K562 (cell line): ENCODE measurements at regions of chr10 and their contacts with region 1.

Region 1: DNA sequence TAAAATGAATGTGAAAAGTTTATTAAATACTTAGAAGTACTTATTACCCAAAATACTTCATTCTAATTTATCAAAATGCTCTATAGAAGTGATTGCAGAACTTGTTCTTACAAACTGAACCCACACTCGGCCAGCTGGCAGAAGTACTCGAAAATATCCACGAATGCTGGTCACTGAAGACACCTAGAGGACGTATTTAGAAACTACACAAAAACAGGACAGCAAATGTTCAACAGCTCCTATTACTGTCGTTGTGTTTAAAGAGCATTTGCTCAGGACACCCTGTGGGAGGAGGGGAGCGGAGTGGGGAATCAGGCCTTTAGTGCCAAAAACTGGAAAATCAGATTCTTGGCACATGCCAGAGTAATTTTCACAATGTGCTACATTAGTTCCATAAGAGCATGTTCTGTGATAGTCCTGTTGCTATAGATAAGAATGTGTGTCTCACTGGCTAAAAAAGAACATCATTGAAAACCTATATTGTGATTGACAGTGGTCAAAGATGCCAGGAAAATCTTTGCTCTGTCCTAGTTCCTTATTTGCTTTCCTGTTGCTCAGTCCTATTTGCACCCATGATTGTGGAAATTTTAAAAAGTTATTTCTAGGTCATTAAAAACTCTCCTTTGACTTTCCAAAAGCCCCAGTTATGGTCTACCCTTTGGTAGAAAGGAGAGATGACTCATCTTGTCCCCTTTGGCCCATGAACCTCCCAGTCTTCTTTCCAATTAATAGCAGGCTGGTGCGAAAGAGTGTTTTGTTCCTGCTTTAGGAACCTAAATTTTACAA is 49.0 kb upstream of the NRBF2 start:
- DNase-seq: peak; percentile 40 to 73 (median 42)
- ATAC-seq: peak; percentile 96
- H3K4me3 ChIP-seq: no peak overlapping the region
- H3K27ac ChIP-seq: no peak overlapping the region
- H3K4me1 ChIP-seq: no peaks in the 10 kb centered on the region
- H3K27me3 ChIP-seq: 0 out of 5 replicates have a peak, but pooled peaks cover 0 to 5% of the 10 kb centered on the region in 2 experiments
- CTCF ChIP-seq: peak; percentile 68 to 91 (median 76)
- EP300 ChIP-seq: no peak
- POLR2A ChIP-seq: no peak
- RAD21 ChIP-seq: peak; percentile 90

Region 2: GRCh38 chr10:62610649-62611229 is 473.4 kb before region 1 on chr10:
- CTCF ChIA-PET with region 1: no interaction called
- POLR2A ChIA-PET with region 1: no interaction called
- in situ Hi-C with region 1: no loop called
- intact Hi-C with region 1: loop called (anchors 5 kb)
- DNase-seq: peak; percentile 56 to 67 (median 59)
- ATAC-seq: peak; percentile 93
- H3K4me3 ChIP-seq: no peak overlapping the region
- H3K27ac ChIP-seq: no peak overlapping the region
- H3K4me1 ChIP-seq: no peaks in the 10 kb centered on the region
- H3K27me3 ChIP-seq: no peaks in the 10 kb centered on the region
- CTCF ChIP-seq: peak; percentile 71 to 82 (median 80)
- EP300 ChIP-seq: no peak
- POLR2A ChIP-seq: no peak
- RAD21 ChIP-seq: peak; percentile 65 to 75

Region 3: GRCh38 chr10:63003816-63004453 is 80.2 kb before region 1 on chr10:
- CTCF ChIA-PET with region 1: interaction called, 6 read pairs
- POLR2A ChIA-PET with region 1: no interaction called
- in situ Hi-C with region 1: no loop called
- intact Hi-C with region 1: loop called (anchors 5 kb)
- DNase-seq: peak in 2 of 4 experiments; percentile 22
- ATAC-seq: no peak; the same call in 2 of the 3 replicates
- H3K4me3 ChIP-seq: no peak overlapping the region
- H3K27ac ChIP-seq: no peak overlapping the region
- H3K4me1 ChIP-seq: no peaks in the 10 kb centered on the region
- H3K27me3 ChIP-seq: peaks cover 0 to 2% of the 10 kb centered on the region in 2 experiments; a peak in 2 of 5 replicates
- CTCF ChIP-seq: peak; percentile 24 to 41 (median 39); a peak in 3 of 6 replicates
- EP300 ChIP-seq: no peak
- POLR2A ChIP-seq: no peak
- RAD21 ChIP-seq: peak in 1 of 2 experiments; percentile 44; a peak in 2 of 4 replicates

Region 4: DNA sequence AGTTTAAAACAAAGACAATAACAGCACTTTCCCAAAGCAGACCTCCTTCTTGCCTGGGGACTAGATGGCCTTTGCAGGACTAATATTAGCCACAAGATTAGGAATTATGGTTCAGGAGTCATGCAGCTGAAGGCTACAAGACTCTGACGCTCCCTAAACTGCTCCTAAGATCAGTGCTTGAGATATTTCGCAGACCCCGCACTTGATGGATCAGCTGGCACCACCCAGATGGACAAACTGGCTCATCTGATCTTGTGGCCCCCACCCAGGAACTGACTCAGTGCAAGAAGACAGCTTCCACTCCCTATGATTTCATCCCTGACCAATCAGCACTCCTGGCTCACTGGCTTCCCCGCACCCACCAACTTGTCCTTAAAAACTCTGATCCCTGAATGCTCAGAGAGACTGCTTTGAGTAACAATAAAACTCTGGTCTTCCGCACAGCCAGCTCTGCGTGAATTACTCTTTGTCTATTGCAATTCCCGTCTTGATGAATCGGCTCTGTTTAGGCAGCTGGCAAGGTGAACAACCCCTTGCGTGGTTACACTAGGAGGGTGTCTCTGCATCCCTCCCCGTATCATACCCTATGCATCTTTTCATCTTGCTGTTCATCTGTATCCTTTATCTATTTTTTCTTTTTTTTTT is 22.1 kb after region 1 on chr10:
- CTCF ChIA-PET with region 1: no interaction called
- POLR2A ChIA-PET with region 1: no interaction called
- in situ Hi-C with region 1: no loop called
- intact Hi-C with region 1: no loop called
- DNase-seq: peak in 1 of 4 experiments; percentile 43
- ATAC-seq: peak; percentile 11
- H3K4me3 ChIP-seq: no peak overlapping the region
- H3K27ac ChIP-seq: peak overlapping the region; percentile 79; the same call in 2 of the 3 replicates
- H3K4me1 ChIP-seq: peaks cover 0 to 39% of the 10 kb centered on the region in 2 experiments; a peak in 3 of 5 replicates
- H3K27me3 ChIP-seq: no peaks in the 10 kb centered on the region
- CTCF ChIP-seq: no peak
- EP300 ChIP-seq: no peak; the same call in 1 of the 2 replicates
- POLR2A ChIP-seq: no peak
- RAD21 ChIP-seq: no peak

Region 5: DNA sequence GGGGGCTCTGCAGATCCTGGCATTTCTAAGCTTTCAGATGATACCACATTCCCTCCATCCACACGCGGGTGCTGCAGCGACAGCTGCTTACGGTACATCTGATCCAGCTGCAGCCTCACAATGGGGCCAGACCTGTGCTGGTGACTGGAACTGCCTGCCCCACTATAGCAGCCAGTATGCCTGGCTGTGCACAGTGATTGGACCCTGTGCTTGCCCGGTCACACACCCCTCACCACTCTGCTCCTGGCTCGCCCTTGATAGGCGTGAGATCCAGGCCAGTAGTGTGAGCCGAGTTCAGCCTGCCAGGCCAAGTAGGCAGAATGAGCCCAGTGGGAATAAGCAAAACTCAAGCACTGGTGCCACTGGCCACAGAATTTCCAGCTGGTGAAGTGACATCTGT is 213.8 kb after region 1 on chr10:
- CTCF ChIA-PET with region 1: no interaction called
- POLR2A ChIA-PET with region 1: no interaction called
- in situ Hi-C with region 1: no loop called
- intact Hi-C with region 1: no loop called
- DNase-seq: no peak
- ATAC-seq: no peak
- H3K4me3 ChIP-seq: no peak overlapping the region
- H3K27ac ChIP-seq: no peak overlapping the region
- H3K4me1 ChIP-seq: peaks cover 4 to 7% of the 10 kb centered on the region in 2 experiments; a peak in 4 of 5 replicates
- H3K27me3 ChIP-seq: no peaks in the 10 kb centered on the region
- CTCF ChIP-seq: no peak
- EP300 ChIP-seq: no peak
- POLR2A ChIP-seq: no peak
- RAD21 ChIP-seq: no peak